Heart right ventricle (tissue), 16 donors: ENCODE measurements at regions of chr20 and their contacts with region 1.

Region 1: GRCh38 chr20:37534401-37535157 is 6.9 kb upstream of the BLCAP start:
- DNase-seq: peak in 1 of 2 donors; percentile 64
- ATAC-seq: peak; percentile 81 to 92 (median 86)
- H3K4me3 ChIP-seq: no peak overlapping the region
- H3K27ac ChIP-seq: no peak overlapping the region
- H3K4me1 ChIP-seq: peaks cover 0 to 8% (median 0%) of the 10 kb centered on the region in 9 donors
- H3K27me3 ChIP-seq: no peaks in the 10 kb centered on the region
- CTCF ChIP-seq: peak; percentile 78 to 92 (median 88)

Region 2: GRCh38 chr20:37202267-37202943 is 332.2 kb before region 1 on chr20:
- intact Hi-C with region 1: loop called in 7 of 10 experiments (anchors 2 to 5 kb)
- DNase-seq: peak in 1 of 2 donors; percentile 16
- ATAC-seq: peak in 4 of 8 donors; percentile 56 to 70 (median 64)
- H3K4me3 ChIP-seq: no peak overlapping the region
- H3K27ac ChIP-seq: peak overlapping the region in 1 of 10 donors; percentile 9
- H3K4me1 ChIP-seq: peaks cover 0 to 20% (median 6%) of the 10 kb centered on the region in 9 donors
- H3K27me3 ChIP-seq: no peaks in the 10 kb centered on the region
- CTCF ChIP-seq: peak; percentile 63 to 82 (median 74)

Region 3: DNA sequence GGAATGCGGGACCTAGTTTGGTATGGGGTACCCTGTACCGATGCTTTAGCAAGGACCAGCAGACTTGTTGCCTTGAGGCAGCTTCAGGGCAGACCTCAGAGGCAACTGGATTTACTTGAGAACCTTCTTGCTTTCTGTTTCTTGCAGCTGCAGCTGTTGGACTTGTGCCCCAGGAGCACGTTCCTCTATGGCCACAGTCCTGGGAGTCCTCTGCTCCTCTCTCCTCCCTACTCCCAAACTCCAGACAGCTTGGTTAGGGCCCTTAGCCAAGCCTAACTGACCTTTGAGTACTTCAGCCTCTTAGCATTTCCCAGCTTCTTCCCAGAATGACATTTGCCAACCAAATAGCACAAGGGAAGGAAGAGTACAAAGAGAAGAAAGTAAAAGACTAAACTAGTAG is 307.7 kb before region 1 on chr20:
- intact Hi-C with region 1: no loop called
- DNase-seq: peak; percentile 47 to 63
- ATAC-seq: peak; percentile 47 to 74 (median 66)
- H3K4me3 ChIP-seq: no peak overlapping the region
- H3K27ac ChIP-seq: peak overlapping the region in 6 of 10 donors; percentile 14 to 80 (median 72)
- H3K4me1 ChIP-seq: peaks cover 6 to 67% (median 30%) of the 10 kb centered on the region in 9 donors
- H3K27me3 ChIP-seq: no peaks in the 10 kb centered on the region
- CTCF ChIP-seq: no peak

Region 4: GRCh38 chr20:37270576-37271420 is 263.8 kb before region 1 on chr20:
- intact Hi-C with region 1: loop called (anchors 1 to 5 kb)
- DNase-seq: no peak
- ATAC-seq: peak in 6 of 8 donors; percentile 19 to 65 (median 30)
- H3K4me3 ChIP-seq: no peak overlapping the region
- H3K27ac ChIP-seq: peak overlapping the region in 2 of 10 donors; percentile 9 to 82
- H3K4me1 ChIP-seq: peaks cover 0 to 25% (median 0%) of the 10 kb centered on the region in 9 donors
- H3K27me3 ChIP-seq: no peaks in the 10 kb centered on the region
- CTCF ChIP-seq: no peak

Region 5: DNA sequence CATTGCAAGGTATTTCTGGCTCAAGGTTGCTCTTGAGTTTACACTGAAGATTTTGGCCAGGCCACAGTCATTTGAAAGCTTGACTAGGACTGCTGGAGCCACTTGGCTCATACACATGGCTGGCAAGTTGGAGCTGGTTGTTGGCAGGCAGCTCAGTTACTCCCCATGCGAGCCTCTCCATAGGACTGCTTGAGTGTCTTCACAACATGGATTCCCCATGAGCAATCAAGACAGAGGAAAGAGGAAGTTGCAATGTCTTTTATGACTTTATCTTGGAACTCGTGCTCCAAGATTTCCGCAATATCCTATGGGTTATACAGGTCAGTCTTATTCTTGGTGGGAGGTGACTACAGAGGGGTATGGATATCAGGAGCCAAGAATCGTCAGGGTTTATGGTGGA is 246.5 kb before region 1 on chr20:
- intact Hi-C with region 1: loop called in 3 of 10 experiments (anchors 5 kb)
- DNase-seq: no peak
- ATAC-seq: no peak
- H3K4me3 ChIP-seq: no peak overlapping the region
- H3K27ac ChIP-seq: no peak overlapping the region
- H3K4me1 ChIP-seq: peaks cover 6 to 28% (median 12%) of the 10 kb centered on the region in 9 donors
- H3K27me3 ChIP-seq: peaks cover 0 to 9% (median 0%) of the 10 kb centered on the region in 7 donors
- CTCF ChIP-seq: no peak

Region 6: DNA sequence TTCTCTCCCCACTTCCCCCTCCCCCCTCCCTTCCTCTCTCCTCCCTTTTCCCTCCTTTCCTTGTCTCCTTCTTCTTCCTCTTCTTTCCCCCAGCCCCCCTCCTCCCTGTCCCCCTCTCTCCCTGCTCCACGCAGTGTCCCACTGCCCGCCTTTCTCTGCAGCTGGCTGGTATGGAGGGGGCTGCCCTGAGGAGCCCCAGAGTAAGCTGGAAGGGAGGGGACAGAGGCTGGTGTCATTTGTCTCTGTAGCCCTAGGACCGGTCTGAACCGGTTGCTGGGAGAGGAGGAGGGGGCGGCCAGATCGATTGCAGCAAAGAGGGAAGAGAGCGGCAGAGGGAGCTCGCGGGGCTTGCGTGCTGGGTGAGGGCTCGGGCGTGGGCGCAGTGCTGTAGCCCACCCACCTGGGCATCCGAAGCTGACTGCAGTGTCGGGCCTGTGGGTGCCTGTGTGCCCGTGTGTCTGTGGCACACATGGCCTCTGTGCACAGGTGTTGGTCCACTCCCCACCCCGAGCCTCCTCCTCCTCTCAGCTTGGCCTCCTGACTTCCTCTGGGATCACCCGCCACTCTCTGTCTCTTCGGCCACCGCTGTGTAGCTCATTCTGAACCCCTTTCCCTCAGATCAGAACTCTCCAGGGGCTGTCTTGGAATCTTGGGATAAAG is 138.0 kb before region 1 on chr20:
- intact Hi-C with region 1: no loop called
- DNase-seq: no peak
- ATAC-seq: no peak
- H3K4me3 ChIP-seq: no peak overlapping the region
- H3K27ac ChIP-seq: no peak overlapping the region
- H3K4me1 ChIP-seq: peaks cover 0 to 14% (median 0%) of the 10 kb centered on the region in 9 donors
- H3K27me3 ChIP-seq: no peaks in the 10 kb centered on the region
- CTCF ChIP-seq: no peak